GM10248 (cell line): ENCODE measurements at regions of chr7 and their contacts with region 1.

Region 1: DNA sequence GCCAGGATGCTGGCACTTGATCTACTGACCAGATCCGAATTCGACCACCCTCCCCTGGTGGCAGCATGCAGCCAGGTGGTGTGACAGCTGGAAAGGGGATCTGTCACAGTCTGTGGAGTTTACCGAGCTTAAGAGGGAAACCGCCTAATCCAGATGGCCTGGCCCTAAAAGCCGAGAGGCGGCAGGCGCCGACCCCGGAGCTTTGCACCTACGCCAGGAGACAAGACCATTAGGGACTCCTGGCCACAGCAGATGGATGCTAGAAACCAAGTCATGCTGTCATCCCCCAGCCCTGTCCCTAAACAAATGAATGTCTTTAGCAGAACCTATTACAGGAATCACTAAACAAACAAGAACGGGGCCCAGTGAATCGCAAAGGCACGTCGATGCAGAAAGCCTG is 27.7 kb downstream of the RCC1L start:
- DNase-seq: no peak
- CTCF ChIP-seq: no peak

Region 2: GRCh38 chr7:74412056-74412455 is 633.8 kb before region 1 on chr7:
- CTCF ChIA-PET with region 1: interaction called, 14 read pairs
- POLR2A ChIA-PET with region 1: no interaction called
- DNase-seq: no peak
- CTCF ChIP-seq: no peak

Region 3: DNA sequence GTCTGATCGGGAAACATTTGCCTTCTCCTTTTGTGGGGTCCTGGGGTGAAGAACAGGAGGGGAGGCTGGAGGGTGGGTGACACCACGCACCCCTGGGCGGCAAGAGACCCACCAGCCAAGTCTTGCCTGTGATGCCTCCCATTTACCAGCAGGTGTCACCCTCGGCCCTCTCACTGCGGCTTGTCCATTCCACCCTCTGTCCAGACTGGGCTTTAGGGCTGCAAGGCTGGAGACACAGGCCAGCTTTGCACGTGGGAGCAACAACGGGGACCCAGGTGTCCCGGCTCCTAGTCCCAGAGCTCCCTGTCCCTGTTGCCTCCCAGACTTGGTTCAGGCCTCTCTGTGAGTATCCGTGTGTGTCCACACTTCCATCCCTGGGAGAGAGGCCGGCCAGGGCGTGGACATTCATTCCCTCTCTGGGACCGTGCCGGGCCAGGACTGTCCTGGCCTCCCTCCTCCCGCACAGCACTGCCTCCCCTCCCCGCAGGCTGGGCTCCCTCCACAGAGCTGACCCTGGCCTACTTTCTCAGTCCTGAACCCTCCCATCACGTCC is 628.4 kb before region 1 on chr7:
- CTCF ChIA-PET with region 1: interaction called, 14 read pairs
- POLR2A ChIA-PET with region 1: no interaction called
- DNase-seq: peak; percentile 92
- CTCF ChIP-seq: peak; percentile 93

Region 4: GRCh38 chr7:75055830-75056772 is 10.2 kb after region 1 on chr7:
- CTCF ChIA-PET with region 1: interaction called, 10 read pairs
- POLR2A ChIA-PET with region 1: no interaction called
- DNase-seq: no peak
- CTCF ChIP-seq: no peak

Region 5: GRCh38 chr7:75066521-75066920 is 20.6 kb after region 1 on chr7:
- CTCF ChIA-PET with region 1: no interaction called
- POLR2A ChIA-PET with region 1: no interaction called
- DNase-seq: no peak
- CTCF ChIP-seq: no peak